ENCODE measurements at regions of chr6 and their contacts with region 1.

Region 1: GRCh38 chr6:136249811-136250685 is at the start of gene MTFR2:
- DNase-seq: peak; percentile 92 to 98
- ATAC-seq: peak; percentile 93
- total RNA-seq, gene MTFR2: 1.2 to 3.1 TPM

Region 2: DNA sequence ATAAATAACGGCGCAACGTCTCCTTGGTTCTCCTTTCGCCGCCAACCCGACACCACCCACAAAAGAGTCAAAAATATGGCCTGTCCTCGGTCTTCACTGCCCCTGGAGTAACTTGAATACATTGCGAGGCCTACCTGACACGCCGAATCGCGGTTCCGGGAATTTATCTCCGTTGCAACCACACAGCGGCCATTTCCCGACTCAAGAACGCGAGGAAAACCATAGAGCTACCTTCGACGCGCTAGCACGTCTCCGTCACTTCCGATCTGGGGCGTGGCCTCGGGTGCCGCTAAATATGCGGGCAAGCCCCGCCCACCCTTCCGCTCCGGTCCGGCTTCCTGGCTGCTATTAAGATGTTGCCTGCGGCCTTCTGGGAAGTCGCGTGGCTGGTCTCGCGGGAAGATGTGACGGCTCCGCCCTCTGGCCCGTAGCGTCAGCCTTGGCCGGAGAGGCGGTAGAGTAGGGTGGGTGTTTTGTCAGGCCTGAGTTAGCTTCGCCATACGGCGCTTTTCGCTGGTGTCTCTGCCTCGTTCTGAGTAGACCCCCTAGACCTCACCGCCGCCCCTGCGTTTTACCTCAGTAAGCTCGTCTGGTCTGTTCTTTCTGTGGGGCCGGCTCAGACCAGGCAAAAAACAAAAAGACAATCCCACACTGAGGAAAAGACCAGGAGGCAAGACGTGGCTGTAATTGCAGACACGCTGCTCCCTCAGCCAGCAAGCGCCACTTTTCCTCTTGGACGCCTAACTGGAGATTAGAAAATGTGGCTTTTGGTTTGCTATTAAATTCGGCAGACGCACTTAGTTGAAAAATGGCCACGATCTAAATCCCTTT is 39.7 kb after region 1 on chr6 and contains the start of gene BCLAF1:
- intact Hi-C with region 1: loop called in 1 of 2 experiments (anchors 5 kb)
- DNase-seq: peak; percentile 100
- ATAC-seq: peak; percentile 87
- total RNA-seq, gene BCLAF1: 106 to 115 TPM

Region 3: GRCh38 chr6:136306466-136306865 is 56.4 kb after region 1 on chr6:
- intact Hi-C with region 1: no loop called
- DNase-seq: no peak
- ATAC-seq: no peak

Region 4: DNA sequence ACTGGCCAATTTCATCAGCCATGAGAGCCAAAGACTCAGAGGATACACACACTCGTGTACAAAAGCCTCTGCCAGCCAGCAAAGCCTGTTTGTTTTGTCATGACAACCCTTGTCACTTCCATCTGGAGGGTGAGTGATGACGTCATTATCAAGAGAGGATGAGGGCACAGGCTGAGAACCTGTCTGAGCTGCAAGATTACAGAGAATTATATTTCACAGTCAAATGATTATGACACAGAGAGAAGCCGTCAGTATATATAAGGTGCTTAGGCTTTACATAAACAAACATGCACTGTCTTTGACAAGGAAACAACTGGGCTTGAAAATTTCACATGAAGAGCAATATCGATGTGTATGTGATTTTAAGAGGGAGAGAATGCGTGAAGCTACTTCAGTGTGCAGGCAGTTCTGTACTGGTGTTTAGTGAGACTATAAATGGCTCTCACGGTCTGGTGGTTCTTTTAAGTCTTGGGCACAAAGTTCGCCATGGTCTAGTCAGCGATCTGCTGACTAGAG is 76.0 kb after region 1 on chr6:
- intact Hi-C with region 1: no loop called
- DNase-seq: no peak
- ATAC-seq: no peak

Region 5: DNA sequence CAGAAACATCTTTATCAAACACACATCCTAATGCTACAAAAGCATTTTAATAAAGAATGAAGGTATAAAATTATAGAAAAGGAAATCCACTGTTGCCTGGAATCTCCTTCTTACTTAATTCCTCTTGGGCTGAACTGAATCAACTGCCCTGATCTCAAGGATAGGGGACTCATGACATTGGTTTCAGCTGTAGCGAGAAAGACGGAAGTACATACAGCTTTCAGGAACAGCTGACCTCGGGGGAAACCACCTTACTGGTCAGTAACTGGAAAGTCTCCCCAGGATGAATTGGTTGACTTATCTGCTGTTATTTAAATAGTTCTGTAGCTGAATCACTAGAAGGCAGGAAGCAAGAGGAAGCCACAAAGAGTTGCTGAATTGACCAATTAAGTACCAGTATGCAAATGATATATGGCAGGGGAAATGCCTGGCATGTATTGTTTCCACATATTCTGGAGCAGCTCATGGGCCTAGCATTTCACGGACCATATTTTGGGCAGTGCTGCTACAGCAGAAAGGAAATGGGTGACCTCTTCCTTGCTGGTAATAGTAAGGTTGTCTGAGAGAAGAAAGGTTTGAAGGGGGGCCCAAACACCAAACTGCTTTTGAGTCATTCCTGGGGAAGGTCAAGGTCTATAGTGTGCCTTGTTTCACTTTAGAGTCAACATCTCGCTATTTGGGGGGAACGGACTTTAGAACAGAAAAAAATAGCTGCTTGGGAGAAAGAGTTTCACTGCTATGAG is 343.9 kb after region 1 on chr6:
- intact Hi-C with region 1: no loop called
- DNase-seq: peak in 1 of 2 donors; percentile 34
- ATAC-seq: peak; percentile 59

Measured in left colon (tissue), 2 donors.